ENCODE measurements at regions of chr19 and their contacts with region 1.

Region 1: GRCh38 chr19:57682226-57682766 is 519 bp downstream of the ZNF551 start:
- DNase-seq: no peak
- ATAC-seq: no peak
- H3K4me3 Mint-ChIP-seq: peak overlapping the region; percentile 98
- H3K27ac Mint-ChIP-seq: peak overlapping the region; percentile 90
- H3K4me1 Mint-ChIP-seq: peaks cover 39% of the 10 kb centered on the region
- H3K27me3 Mint-ChIP-seq: peaks cover 8% of the 10 kb centered on the region
- CTCF ChIP-seq: no peak

Region 2: DNA sequence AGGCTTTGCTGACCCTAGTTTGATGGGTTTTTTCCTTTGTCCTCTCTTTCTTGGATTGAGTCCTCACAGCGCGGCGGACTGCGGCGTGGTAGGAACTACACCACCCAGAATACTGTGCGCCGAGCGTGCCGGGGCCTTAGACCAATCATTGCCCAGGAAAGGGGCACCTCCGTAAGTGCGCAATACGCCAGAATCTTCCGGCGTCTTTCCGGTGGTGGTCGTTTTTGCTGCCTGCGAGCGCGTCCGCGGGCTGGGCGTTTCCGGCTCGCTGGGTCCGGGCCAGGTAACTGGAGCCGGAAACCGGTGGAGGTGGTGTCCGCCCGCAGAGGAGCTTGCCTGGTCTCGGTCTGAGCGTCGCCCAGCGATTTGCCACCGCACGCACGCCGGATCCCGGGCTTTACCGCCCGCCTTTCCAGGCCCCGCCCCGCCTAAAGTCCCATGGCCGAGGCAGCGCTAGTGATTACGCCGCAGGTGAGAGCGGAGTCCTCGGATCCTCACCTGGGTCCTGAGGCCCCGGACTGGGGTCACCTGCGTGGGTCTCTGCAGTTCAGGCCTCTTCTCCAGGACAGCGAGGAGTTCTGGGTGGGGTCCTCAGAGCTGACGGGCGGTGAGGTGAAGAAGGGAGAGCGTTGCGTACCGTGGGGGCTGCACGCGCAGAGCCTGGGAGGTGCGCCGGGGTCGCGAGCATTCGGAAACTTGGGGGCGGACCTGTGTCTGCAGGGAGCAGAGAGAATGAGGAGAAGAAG is 155.0 kb before region 1 on chr19 and contains the start of gene ZNF549:
- CTCF ChIA-PET with region 1: no interaction called
- POLR2A ChIA-PET with region 1: no interaction called
- intact Hi-C with region 1: loop called (anchors 1 kb)
- DNase-seq: peak; percentile 78
- ATAC-seq: peak; percentile 99
- H3K4me3 Mint-ChIP-seq: peak within 1 kb of the TSS; percentile 96
- H3K27ac Mint-ChIP-seq: peak within 1 kb of the TSS; percentile 88
- H3K4me1 Mint-ChIP-seq: peaks cover 24% of the 10 kb centered on the region
- H3K27me3 Mint-ChIP-seq: no peaks in the 10 kb centered on the region
- CTCF ChIP-seq: no peak
- total RNA-seq, gene ZNF549: 14.0 and 16.9 TPM in 2 replicates

Region 3: GRCh38 chr19:57632987-57633831 is 49.1 kb before region 1 on chr19 and contains the start of gene ZNF211:
- CTCF ChIA-PET with region 1: interaction called, 3 read pairs
- POLR2A ChIA-PET with region 1: interaction called, 11 read pairs
- intact Hi-C with region 1: loop called (anchors 1 kb)
- DNase-seq: peak; percentile 81
- ATAC-seq: peak; percentile 100
- H3K4me3 Mint-ChIP-seq: peak within 1 kb of the TSS; percentile 94
- H3K27ac Mint-ChIP-seq: peak within 1 kb of the TSS; percentile 87
- H3K4me1 Mint-ChIP-seq: peaks cover 19% of the 10 kb centered on the region
- H3K27me3 Mint-ChIP-seq: no peaks in the 10 kb centered on the region
- CTCF ChIP-seq: no peak
- total RNA-seq, gene ZNF211: 22.0 and 26.0 TPM in 2 replicates

Region 4: DNA sequence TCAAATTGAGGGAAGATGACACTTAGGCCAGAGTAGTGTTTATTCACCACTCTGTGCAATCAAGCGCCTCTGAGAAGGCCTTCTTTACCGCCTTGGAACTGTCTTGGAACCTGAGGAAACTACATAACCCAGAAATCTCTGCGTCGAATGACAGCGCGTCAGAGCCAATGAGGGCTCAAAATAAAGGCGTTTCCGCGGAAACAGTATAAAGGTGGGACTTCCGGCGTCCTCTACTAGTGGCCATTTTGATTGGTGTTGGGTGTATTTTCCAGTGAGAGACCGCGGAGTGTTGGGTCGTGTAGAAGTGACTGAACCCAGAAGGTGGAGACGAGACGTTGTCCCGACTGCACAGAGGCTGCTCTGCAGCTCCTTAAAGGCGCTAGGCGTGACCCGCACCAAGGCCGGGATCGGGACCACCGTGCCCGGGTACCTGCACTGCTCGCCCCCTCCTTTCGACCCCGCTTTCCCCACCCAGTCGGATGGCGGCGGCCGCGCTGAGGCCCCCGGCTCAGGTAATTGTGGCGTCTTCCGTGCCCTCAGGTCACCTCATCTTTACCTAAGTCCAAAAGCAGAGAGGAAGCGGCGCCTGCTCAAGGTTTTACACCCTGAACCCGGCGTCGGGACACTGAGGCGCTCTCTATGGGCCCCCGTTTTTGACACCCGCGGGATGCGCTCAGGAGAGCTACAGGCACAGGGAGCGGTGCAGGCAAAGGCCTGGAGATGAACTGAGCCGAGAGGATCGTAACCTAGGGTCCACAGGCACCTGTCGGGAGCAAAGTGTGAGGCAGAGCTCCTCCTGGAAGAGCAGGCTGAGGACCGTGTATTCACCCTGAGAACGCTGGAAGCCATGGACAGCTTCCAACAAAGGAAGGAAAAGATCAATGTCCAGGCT is 64.5 kb after region 1 on chr19 and contains the start of gene ZNF776:
- CTCF ChIA-PET with region 1: no interaction called
- POLR2A ChIA-PET with region 1: interaction called, 11 read pairs
- intact Hi-C with region 1: loop called (anchors 1 kb)
- DNase-seq: peak; percentile 54
- ATAC-seq: peak; percentile 95
- H3K4me3 Mint-ChIP-seq: peak within 1 kb of the TSS; percentile 91
- H3K27ac Mint-ChIP-seq: peak within 1 kb of the TSS; percentile 87
- H3K4me1 Mint-ChIP-seq: peaks cover 42% of the 10 kb centered on the region
- H3K27me3 Mint-ChIP-seq: no peaks in the 10 kb centered on the region
- CTCF ChIP-seq: no peak
- total RNA-seq, gene ZNF776: 26.5 and 29.9 TPM in 2 replicates

Region 5: GRCh38 chr19:58002384-58003173 is 320.3 kb after region 1 on chr19 and contains the start of gene ZNF606:
- CTCF ChIA-PET with region 1: no interaction called
- POLR2A ChIA-PET with region 1: interaction called, 3 read pairs
- intact Hi-C with region 1: loop called (anchors 5 kb)
- DNase-seq: peak; percentile 87
- ATAC-seq: peak; percentile 97
- H3K4me3 Mint-ChIP-seq: peak within 1 kb of the TSS; percentile 88
- H3K27ac Mint-ChIP-seq: peak within 1 kb of the TSS; percentile 87
- H3K4me1 Mint-ChIP-seq: peaks cover 38% of the 10 kb centered on the region
- H3K27me3 Mint-ChIP-seq: no peaks in the 10 kb centered on the region
- CTCF ChIP-seq: no peak
- total RNA-seq, gene ZNF606: 27.8 and 32.9 TPM in 2 replicates